ENCODE measurements at regions of chr3 and their contacts with region 1.

Region 1: GRCh38 chr3:193772422-193772763 is 179.4 kb downstream of the OPA1 start:
- DNase-seq: no peak
- H3K4me3 ChIP-seq: no peak overlapping the region
- CTCF ChIP-seq: no peak

Region 2: GRCh38 chr3:193711964-193712598 is 60.3 kb before region 1 on chr3:
- in situ Hi-C with region 1: loop called (anchors 10 kb)
- DNase-seq: no peak
- H3K4me3 ChIP-seq: no peak overlapping the region
- CTCF ChIP-seq: no peak

Region 3: DNA sequence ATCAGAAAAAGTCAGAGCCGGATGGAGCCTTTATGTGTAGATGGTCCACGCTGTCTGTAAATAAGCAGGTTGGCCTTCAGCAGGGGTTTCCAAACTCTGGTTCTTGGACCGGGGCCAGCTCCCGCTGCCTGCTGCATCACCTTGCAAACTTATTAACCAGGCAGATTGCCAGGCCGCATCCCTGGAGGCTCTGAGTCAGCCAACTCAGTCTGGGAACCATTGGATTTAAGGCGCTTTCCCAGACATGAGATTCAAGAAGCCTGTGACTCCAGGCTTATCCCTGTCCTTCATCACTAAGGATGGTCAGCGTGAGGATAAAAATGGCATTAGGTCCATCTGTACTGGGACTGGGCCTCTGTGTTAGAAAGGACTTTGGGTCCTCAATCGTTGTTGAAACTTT is 33.1 kb after region 1 on chr3:
- in situ Hi-C with region 1: no loop called
- DNase-seq: peak; percentile 98
- H3K4me3 ChIP-seq: no peak overlapping the region
- CTCF ChIP-seq: no peak

Region 4: GRCh38 chr3:194300382-194300758 is 528.0 kb after region 1 on chr3:
- in situ Hi-C with region 1: loop called (anchors 5 kb)
- DNase-seq: peak; percentile 85
- H3K4me3 ChIP-seq: no peak overlapping the region
- CTCF ChIP-seq: peak; percentile 33